ENCODE measurements at regions of chr18 and their contacts with region 1.

Region 1: DNA sequence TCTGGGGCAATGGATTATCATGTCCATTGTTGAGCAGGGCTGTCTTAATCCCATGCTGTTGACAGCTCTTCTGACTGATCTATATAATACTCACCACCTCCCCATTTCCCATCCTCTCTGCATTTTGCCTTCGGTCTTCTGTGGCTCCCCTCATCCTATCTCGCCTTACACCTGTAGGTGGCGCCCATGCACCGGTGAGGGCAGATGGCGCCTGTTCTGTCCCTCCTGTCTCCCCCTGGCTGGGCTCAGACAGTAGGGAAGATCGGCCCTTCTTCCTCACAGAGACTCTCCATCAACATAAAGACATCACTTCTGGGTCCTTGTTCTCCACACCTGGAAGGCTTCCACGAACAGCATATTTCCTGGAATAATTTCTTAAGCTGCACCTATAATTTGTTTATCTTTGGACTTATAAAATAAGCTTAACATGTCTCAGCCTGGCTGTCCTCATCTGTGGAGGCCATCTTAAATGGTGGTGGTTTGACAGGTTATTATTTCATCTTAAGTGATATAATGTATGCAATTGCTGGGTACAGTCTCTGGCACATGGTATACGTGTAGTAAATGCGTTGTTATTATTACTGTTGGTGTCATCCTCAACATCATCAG is 10.9 kb upstream of the CDH20 start:
- DNase-seq: peak; percentile 89
- ATAC-seq: peak; percentile 100
- H3K4me3 Mint-ChIP-seq: no peak overlapping the region
- H3K27ac Mint-ChIP-seq: no peak overlapping the region
- H3K4me1 Mint-ChIP-seq: peaks cover under 1% of the 10 kb centered on the region; the same call in 1 of the 2 replicates
- H3K27me3 Mint-ChIP-seq: no peaks in the 10 kb centered on the region
- CTCF ChIP-seq: peak; percentile 75

Region 2: GRCh38 chr18:61333746-61334490 is 11.5 kb after region 1 on chr18:
- CTCF ChIA-PET with region 1: interaction called, 16 read pairs
- POLR2A ChIA-PET with region 1: no interaction called
- DNase-seq: peak; percentile 51
- ATAC-seq: peak; percentile 70
- H3K4me3 Mint-ChIP-seq: peak overlapping the region; percentile 89
- H3K27ac Mint-ChIP-seq: no peak overlapping the region
- H3K4me1 Mint-ChIP-seq: peaks cover 33% of the 10 kb centered on the region
- H3K27me3 Mint-ChIP-seq: peaks cover 36% of the 10 kb centered on the region
- CTCF ChIP-seq: no peak

Region 3: GRCh38 chr18:61360404-61361383 is 38.3 kb after region 1 on chr18:
- CTCF ChIA-PET with region 1: no interaction called
- POLR2A ChIA-PET with region 1: no interaction called
- DNase-seq: no peak
- ATAC-seq: peak; percentile 32
- H3K4me3 Mint-ChIP-seq: no peak overlapping the region
- H3K27ac Mint-ChIP-seq: no peak overlapping the region
- H3K4me1 Mint-ChIP-seq: peaks cover 12% of the 10 kb centered on the region
- H3K27me3 Mint-ChIP-seq: no peaks in the 10 kb centered on the region
- CTCF ChIP-seq: no peak

Region 4: DNA sequence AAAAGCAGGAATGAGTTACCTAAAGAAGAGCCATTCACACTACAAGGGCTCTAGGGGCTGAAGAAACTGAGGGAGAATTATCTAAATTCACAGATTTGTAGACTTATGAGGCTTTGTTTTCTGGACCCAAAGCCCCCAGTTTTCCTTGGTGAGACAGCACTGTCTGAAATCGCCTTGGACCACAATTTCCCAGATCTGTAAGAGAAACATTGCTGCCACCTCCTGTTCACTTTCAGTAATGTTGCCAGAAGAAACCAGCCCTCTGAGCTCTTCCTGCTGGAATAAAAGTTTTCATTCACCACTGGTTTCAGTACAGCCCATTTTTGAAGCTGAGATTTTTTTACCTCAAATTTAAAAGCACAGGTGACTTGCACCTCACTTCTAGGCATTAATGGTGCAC is 180.1 kb after region 1 on chr18:
- CTCF ChIA-PET with region 1: interaction called, 21 read pairs
- POLR2A ChIA-PET with region 1: no interaction called
- DNase-seq: peak; percentile 37
- ATAC-seq: peak; percentile 88
- H3K4me3 Mint-ChIP-seq: no peak overlapping the region
- H3K27ac Mint-ChIP-seq: no peak overlapping the region
- H3K4me1 Mint-ChIP-seq: peaks cover 20% of the 10 kb centered on the region
- H3K27me3 Mint-ChIP-seq: no peaks in the 10 kb centered on the region; the same call in 1 of the 2 replicates
- CTCF ChIP-seq: peak; percentile 54

Region 5: GRCh38 chr18:61581578-61582201 is 259.3 kb after region 1 on chr18:
- CTCF ChIA-PET with region 1: no interaction called
- POLR2A ChIA-PET with region 1: no interaction called
- DNase-seq: peak; percentile 93
- ATAC-seq: peak; percentile 98
- H3K4me3 Mint-ChIP-seq: peak overlapping the region; percentile 80
- H3K27ac Mint-ChIP-seq: peak overlapping the region; percentile 11; the same call in 1 of the 2 replicates
- H3K4me1 Mint-ChIP-seq: peaks cover 12% of the 10 kb centered on the region
- H3K27me3 Mint-ChIP-seq: peaks cover 16% of the 10 kb centered on the region
- CTCF ChIP-seq: peak; percentile 99

Measured in WTC11 (cell line).